IMR-90 (cell line): ENCODE measurements at regions of chr13 and their contacts with region 1.

Region 1: GRCh38 chr13:107650081-107650701 is 565.1 kb downstream of the LIG4 start:
- DNase-seq: peak; percentile 62
- ATAC-seq: peak; percentile 60
- H3K4me3 ChIP-seq: no peak overlapping the region
- H3K27ac ChIP-seq: no peak overlapping the region
- H3K4me1 ChIP-seq: no peaks in the 10 kb centered on the region
- H3K27me3 ChIP-seq: no peaks in the 10 kb centered on the region
- CTCF ChIP-seq: peak; percentile 94
- POLR2A ChIP-seq: no peak
- RAD21 ChIP-seq: peak; percentile 80

Region 2: GRCh38 chr13:107450931-107451330 is 199.3 kb before region 1 on chr13:
- CTCF ChIA-PET with region 1: interaction called, 3 read pairs
- POLR2A ChIA-PET with region 1: no interaction called
- dilution Hi-C with region 1: no loop called
- in situ Hi-C with region 1: no loop called
- intact Hi-C with region 1: loop called (anchors 10 kb)
- DNase-seq: peak; percentile 99
- ATAC-seq: peak; percentile 95
- H3K4me3 ChIP-seq: no peak overlapping the region
- H3K27ac ChIP-seq: peak overlapping the region; percentile 50
- H3K4me1 ChIP-seq: peaks cover 16% of the 10 kb centered on the region
- H3K27me3 ChIP-seq: no peaks in the 10 kb centered on the region
- CTCF ChIP-seq: no peak
- POLR2A ChIP-seq: no peak
- RAD21 ChIP-seq: peak; percentile 29; the same call in 1 of the 2 replicates